ENCODE measurements at regions of chr14 and their contacts with region 1.

Region 1: GRCh38 chr14:22556990-22557623 is 31.9 kb downstream of the DAD1 start:
- DNase-seq: peak in 1 of 2 donors; percentile 88
- H3K4me3 ChIP-seq: peak overlapping the region; percentile 50 to 54
- H3K27ac ChIP-seq: peak overlapping the region; percentile 53 to 60
- H3K4me1 ChIP-seq: peaks cover 0 to 11% of the 10 kb centered on the region in 2 donors
- H3K27me3 ChIP-seq: no peaks in the 10 kb centered on the region
- CTCF ChIP-seq: peak; percentile 91 to 100 (median 99)

Region 2: DNA sequence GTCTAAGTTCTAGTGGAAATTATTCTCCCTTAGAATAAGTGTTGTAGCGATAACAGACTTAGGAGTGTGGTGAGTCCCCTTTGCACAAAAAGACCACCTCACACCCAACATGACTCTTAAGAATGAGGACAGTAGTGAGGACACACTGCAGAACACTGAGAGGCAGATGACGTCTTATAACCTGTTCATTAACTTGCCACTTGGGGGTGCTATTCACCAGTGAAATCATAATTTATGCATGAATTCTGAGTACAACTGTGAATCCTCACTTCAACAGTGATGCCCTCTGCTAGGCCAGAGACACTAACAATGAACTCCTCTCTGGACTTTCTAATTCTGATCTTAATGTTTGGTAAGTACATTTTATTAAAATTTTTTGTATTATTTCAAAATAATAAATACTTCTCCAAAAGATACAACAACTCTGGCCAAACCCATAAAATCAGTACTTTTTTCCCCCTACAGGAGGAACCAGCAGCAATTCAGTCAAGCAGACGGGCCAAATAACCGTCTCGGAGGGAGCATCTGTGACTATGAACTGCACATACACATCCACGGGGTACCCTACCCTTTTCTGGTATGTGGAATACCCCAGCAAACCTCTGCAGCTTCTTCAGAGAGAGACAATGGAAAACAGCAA is 242.8 kb before region 1 on chr14:
- intact Hi-C with region 1: loop called (anchors 10 kb)
- DNase-seq: no peak
- H3K4me3 ChIP-seq: no peak overlapping the region
- H3K27ac ChIP-seq: peak overlapping the region in 1 of 2 donors; percentile 30
- H3K4me1 ChIP-seq: peaks cover 0 to 6% of the 10 kb centered on the region in 2 donors
- H3K27me3 ChIP-seq: no peaks in the 10 kb centered on the region
- CTCF ChIP-seq: peak in 2 of 3 experiments; percentile 42 to 63

Region 3: DNA sequence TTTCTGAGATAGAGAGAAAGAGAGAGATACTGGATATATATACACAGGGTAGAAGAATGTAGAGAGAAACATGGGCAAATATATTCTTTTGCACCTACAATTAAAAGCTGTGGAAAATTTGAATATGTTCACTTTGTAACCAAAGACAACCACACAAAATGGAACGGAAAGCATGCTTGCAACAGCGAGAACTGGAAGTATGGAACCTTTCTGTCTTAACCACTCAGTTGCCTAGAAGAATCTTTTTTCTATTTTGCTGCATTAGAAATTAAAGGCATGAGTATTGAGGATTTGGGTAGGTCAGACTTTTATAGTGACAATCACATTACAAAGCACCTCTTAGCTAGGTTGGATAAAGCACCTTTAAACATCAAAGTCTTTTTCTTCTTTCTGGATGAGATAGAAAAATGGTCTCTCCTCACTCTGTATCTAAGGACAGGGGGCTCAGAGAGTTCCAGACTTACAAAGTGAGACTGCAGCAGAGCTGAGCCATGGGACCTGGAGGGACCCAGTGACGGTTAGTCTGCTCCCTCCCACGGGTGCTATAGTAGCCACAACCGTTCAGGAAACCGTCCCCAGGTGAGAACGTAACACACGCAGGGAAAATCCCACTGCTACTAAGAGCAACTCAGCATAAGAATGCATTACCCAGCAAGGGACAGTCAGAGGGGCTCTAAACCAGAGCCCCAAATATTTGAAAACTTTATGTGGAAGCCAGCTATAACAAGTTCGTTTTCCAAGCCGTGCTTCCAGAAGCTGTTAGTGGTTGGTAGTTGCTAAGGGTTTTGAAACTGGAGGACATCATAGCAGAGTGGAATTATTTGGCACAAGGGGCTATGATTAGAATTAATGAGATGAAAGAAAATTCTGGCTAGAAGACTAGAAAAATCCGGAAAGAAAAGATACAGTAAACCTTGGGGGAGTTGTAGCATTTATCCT is 65.2 kb before region 1 on chr14:
- intact Hi-C with region 1: no loop called
- DNase-seq: no peak
- H3K4me3 ChIP-seq: no peak overlapping the region
- H3K27ac ChIP-seq: no peak overlapping the region
- H3K4me1 ChIP-seq: no peaks in the 10 kb centered on the region
- H3K27me3 ChIP-seq: no peaks in the 10 kb centered on the region
- CTCF ChIP-seq: no peak

Region 4: DNA sequence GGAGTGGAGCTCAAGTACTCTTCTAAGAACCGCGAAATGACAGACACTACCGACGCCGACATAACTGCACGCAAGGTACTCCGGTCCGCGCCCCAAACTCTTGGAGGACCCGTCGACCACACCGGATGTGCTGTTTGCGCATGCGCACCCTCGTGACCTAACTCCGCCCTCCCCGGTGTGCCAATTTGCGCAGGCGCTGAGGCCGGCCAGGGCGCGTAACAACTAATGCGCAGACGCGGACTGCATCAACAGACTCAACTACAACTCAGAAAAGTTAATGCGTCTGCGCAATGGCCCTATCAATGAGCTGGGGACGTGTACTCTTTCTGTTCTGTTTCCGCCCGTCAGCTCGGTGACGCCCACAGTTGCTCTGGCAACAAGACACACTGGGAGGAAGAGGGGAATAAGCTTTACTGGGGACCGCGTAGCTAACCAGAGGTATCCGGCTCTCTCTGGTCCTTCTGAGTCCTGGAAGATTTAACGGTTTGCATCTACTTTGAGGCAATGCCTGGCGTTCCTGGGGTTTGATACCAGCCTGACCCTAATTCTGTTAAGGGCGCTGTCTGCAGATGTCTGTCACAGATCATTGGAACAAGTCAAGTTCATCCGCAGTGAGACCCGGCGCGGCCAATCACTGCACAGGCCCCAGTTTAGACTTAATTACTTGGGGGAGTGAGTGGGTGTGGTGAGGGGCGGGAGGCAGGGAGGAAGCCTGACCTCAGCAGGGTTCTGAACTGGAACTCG is 32.2 kb after region 1 on chr14 and contains the start of gene DAD1:
- intact Hi-C with region 1: loop called (anchors 1 kb)
- DNase-seq: peak; percentile 98 to 100
- H3K4me3 ChIP-seq: peak within 1 kb of the TSS; percentile 67 to 76
- H3K27ac ChIP-seq: peak within 1 kb of the TSS; percentile 88 to 95
- H3K4me1 ChIP-seq: peaks cover 0 to 21% of the 10 kb centered on the region in 2 donors
- H3K27me3 ChIP-seq: no peaks in the 10 kb centered on the region
- CTCF ChIP-seq: peak in 1 of 3 experiments; percentile 34
- total RNA-seq, gene DAD1: 186 TPM

Region 5: DNA sequence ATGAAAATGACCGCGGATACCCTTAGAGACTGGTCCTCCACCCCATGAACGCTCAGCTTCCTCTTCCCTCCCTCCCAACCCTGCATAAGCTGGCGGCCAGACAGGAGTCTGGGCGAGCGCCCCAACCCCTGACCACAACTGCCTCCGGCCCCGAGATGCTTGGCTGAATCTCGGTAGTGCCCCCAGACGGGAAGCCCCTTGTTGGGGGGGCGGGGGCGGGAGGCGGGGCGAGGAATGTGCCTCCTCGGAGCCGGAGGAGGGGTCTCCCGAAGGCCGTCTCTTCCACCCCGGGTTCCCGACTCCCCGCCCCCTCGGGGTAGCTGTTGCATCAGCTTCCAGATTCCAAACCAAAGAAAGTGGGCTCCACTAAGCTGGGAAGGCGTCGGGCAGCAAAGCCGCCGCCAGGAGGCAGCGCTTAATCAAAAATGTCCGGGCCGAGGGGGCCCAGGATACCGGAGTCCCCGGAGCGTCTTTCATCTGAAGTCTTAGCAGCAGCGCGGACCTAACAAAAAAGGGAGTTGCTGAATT is 265.5 kb after region 1 on chr14:
- intact Hi-C with region 1: loop called (anchors 2 kb)
- DNase-seq: peak in 1 of 2 donors; percentile 90
- H3K4me3 ChIP-seq: peak overlapping the region; percentile 66 to 70
- H3K27ac ChIP-seq: peak overlapping the region; percentile 77 to 79
- H3K4me1 ChIP-seq: peaks cover 6 to 42% of the 10 kb centered on the region in 2 donors
- H3K27me3 ChIP-seq: no peaks in the 10 kb centered on the region
- CTCF ChIP-seq: peak; percentile 68 to 92 (median 90)

Region 6: DNA sequence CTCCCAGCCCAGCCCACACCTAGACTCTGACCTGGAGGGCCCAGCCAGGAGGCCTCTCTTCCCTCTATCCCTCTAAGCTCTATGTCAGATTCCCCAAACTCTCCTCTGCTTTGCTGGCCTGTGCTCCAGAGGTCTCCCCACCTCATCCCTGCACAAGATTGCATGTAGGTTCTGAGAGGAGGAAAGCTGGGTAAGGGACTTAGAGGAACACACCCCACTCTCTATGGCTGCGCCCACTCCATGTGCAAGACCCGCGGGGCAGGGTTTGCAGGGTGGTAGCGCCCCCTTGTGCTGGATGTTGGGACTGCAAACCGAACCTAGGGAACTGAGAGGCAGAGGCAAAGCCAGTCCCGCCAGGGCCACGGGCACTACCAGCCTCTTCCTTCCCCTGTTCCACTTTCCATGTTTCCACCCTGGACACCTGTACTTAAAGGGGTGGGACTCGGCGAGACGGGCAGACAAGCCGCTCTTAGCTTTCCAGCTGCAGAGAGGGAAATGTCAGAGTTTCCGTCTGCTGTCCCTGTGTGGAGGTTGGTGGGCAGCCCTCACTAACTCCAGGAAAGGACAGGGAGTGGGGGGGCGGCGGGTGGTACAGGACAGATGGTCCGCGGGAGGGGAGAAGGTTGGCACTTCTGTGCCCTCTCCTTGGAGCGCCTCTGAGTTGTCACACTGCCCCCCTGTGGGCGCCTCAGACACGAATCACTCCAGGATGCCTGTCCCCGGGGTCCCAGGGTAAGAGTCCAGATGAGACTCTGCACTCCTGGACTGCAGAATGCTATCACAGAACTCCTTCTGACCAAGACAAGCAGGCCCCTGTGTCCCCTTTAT is 296.0 kb after region 1 on chr14:
- intact Hi-C with region 1: loop called (anchors 2 kb)
- DNase-seq: peak; percentile 58 to 96
- H3K4me3 ChIP-seq: peak overlapping the region; percentile 42 to 66
- H3K27ac ChIP-seq: peak overlapping the region; percentile 87 to 91
- H3K4me1 ChIP-seq: peaks cover 36 to 43% of the 10 kb centered on the region in 2 donors
- H3K27me3 ChIP-seq: no peaks in the 10 kb centered on the region
- CTCF ChIP-seq: peak; percentile 87 to 95 (median 93)

Region 7: GRCh38 chr14:22986508-22987054 is 429.5 kb after region 1 on chr14:
- intact Hi-C with region 1: loop called (anchors 5 kb)
- DNase-seq: peak; percentile 55 to 94
- H3K4me3 ChIP-seq: no peak overlapping the region
- H3K27ac ChIP-seq: no peak overlapping the region
- H3K4me1 ChIP-seq: peaks cover 0 to 2% of the 10 kb centered on the region in 2 donors
- H3K27me3 ChIP-seq: no peaks in the 10 kb centered on the region
- CTCF ChIP-seq: peak; percentile 85 to 88 (median 85)